Calu3 (cell line): ENCODE measurements at regions of chr11 and their contacts with region 1.

Region 1: GRCh38 chr11:100930185-100930778 is 199.3 kb downstream of the PGR start:
- DNase-seq: peak; percentile 1
- H3K4me3 Mint-ChIP-seq: no peak overlapping the region
- H3K27ac Mint-ChIP-seq: no peak overlapping the region
- H3K4me1 Mint-ChIP-seq: no peaks in the 10 kb centered on the region
- H3K27me3 Mint-ChIP-seq: no peaks in the 10 kb centered on the region
- CTCF ChIP-seq: no peak

Region 2: DNA sequence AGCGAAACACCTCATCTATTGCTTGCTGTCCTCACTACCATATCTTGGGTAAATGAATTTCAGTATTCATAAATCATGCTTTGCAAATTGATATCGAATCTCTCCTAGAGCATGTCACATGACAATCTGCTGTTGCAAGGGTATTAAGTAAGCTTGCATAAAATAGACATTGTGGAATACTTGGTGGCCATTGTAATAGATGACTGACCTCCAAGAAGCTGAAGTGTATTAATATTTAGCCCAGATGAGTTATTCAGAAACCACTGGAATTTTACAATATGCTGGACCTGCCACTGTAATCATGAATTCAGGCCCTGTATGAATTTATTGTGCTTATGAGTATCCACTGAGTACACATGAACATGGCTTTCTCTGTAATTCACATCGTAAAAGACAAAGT is 532.9 kb before region 1 on chr11:
- CTCF ChIA-PET with region 1: no interaction called
- intact Hi-C with region 1: no loop called
- DNase-seq: no peak
- H3K4me3 Mint-ChIP-seq: no peak overlapping the region
- H3K27ac Mint-ChIP-seq: no peak overlapping the region
- H3K4me1 Mint-ChIP-seq: no peaks in the 10 kb centered on the region
- H3K27me3 Mint-ChIP-seq: no peaks in the 10 kb centered on the region
- CTCF ChIP-seq: no peak

Region 3: DNA sequence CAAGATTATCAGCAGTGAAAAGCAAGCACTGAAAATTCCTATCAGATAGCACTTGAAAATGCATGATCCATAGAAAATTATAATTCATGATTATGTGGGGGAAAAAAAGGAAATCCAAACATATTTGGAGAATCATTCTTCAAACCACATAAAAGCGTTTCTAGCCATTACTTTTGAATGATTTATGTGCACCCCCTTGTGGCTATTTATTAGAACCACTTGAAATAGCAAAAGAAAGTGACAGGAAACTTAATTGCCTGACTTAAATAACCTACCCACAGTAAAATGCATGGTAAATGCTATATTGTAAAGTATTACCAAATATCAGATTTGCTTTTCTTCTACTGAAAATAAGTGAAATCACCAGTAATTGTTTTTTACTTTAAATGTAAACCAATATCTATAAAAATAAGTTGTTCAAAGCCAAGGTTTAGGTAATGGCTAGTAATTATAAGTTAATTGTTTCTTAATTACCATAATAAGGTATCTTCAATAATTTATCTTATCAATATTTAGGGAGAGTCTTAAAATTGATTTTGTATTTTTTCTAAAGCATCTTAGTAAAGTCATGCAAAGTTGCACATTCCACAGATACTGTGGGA is 74.7 kb before region 1 on chr11:
- CTCF ChIA-PET with region 1: no interaction called
- intact Hi-C with region 1: loop called (anchors 2 kb)
- DNase-seq: no peak
- H3K4me3 Mint-ChIP-seq: no peak overlapping the region
- H3K27ac Mint-ChIP-seq: no peak overlapping the region
- H3K4me1 Mint-ChIP-seq: peaks cover 36% of the 10 kb centered on the region
- H3K27me3 Mint-ChIP-seq: no peaks in the 10 kb centered on the region
- CTCF ChIP-seq: no peak